Endothelial cell of umbilical vein (primary cell): ENCODE measurements at regions of chr4 and their contacts with region 1.

Region 1: GRCh38 chr4:163484906-163485305 is 9.6 kb upstream of the TMA16 start:
- DNase-seq: peak; percentile 56
- H3K4me3 ChIP-seq: no peak overlapping the region
- H3K27ac ChIP-seq: no peak overlapping the region
- H3K4me1 ChIP-seq: no peaks in the 10 kb centered on the region
- H3K27me3 ChIP-seq: peaks cover 9 to 13% of the 10 kb centered on the region in 2 experiments
- CTCF ChIP-seq: peak; percentile 43 to 49
- POLR2A ChIP-seq: no peak

Region 2: DNA sequence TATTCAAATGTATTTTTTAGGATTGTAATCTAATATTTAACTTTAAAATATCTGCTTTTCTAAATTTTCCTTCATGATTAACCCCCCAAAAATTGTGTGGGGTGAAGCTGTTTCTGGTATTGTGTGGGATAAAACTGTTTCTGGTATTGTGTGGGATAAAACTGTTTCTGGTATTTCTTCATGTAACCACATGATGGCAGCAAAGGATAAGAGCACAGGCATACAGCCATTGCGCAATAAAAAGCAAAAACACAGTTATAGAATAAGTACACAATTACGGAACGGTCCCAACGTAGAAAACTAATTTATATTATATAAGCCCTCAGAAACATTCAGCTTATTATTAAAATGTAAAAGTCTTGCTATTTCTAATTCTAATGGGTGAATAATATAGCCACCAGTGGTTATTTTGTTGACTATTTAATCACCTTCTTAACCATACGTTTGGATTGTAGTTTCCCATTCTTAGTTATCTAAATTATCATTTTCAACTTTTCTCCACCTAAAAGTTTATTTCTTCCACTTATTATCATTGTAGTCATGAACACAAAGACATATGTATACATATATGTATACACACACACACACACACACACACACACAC is 987.2 kb before region 1 on chr4:
- CTCF ChIA-PET with region 1: interaction called, 4 read pairs
- POLR2A ChIA-PET with region 1: no interaction called
- dilution Hi-C with region 1: no loop called
- intact Hi-C with region 1: loop called (anchors 10 kb)
- DNase-seq: peak; percentile 24
- H3K4me3 ChIP-seq: no peak overlapping the region
- H3K27ac ChIP-seq: no peak overlapping the region
- H3K4me1 ChIP-seq: no peaks in the 10 kb centered on the region
- H3K27me3 ChIP-seq: no peaks in the 10 kb centered on the region
- CTCF ChIP-seq: peak; percentile 30 to 44
- POLR2A ChIP-seq: no peak

Region 3: DNA sequence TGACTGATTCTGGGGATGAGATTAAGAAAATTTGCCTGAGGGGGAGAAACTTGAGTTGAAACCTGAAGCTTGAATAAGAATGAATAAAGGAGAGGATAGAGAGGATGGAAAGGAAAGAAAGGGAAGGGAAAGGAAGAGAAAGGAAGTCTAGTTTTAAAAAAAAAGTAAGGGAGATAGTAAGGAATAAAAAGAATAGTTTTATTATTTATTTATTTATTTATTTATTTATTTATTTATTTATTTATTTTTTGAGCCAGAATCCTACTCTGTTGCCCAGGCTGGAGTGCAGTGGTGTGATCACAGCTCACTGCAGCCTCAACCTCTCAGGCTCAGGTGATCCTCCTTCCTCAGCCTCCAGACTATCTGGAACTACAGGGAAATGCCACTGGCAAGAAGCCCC is 256.3 kb before region 1 on chr4:
- CTCF ChIA-PET with region 1: no interaction called
- POLR2A ChIA-PET with region 1: no interaction called
- dilution Hi-C with region 1: no loop called
- intact Hi-C with region 1: no loop called
- DNase-seq: no peak
- H3K4me3 ChIP-seq: no peak overlapping the region
- H3K27ac ChIP-seq: no peak overlapping the region
- H3K4me1 ChIP-seq: no peaks in the 10 kb centered on the region
- H3K27me3 ChIP-seq: no peaks in the 10 kb centered on the region
- CTCF ChIP-seq: no peak
- POLR2A ChIP-seq: no peak

Region 4: DNA sequence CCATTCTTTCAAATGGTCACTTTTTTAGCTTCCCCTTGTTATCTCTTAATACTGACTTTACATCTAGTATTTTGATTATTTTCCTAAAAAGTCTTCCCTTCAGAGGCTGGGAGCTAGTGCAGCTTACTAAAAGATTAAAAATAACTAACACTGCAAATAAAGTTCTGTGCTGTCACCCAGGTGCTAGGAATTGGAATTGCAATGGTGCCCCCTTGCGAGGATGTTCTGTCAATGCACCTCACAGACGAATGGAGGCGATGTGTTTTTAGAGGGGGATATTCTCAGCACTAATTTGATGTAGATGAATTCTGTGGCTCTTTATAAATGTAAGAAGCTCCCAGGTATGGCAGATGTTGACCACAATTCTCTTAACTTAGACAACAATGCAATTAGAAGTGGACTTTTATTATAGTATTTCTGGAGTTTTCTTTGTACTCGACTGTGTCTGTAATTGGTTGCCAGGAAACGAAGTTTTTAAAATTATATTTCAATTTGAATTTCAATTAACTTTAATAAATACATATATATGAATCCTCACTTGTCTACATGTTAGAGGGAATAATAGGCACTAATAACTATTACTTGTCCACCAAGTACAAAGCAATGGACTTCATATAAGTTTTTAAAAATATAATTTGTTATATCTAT is 1247.0 kb after region 1 on chr4:
- CTCF ChIA-PET with region 1: interaction called, 12 read pairs
- POLR2A ChIA-PET with region 1: no interaction called
- dilution Hi-C with region 1: no loop called
- intact Hi-C with region 1: no loop called
- DNase-seq: peak; percentile 46
- H3K4me3 ChIP-seq: no peak overlapping the region
- H3K27ac ChIP-seq: no peak overlapping the region
- H3K4me1 ChIP-seq: no peaks in the 10 kb centered on the region
- H3K27me3 ChIP-seq: no peaks in the 10 kb centered on the region
- CTCF ChIP-seq: peak; percentile 73 to 74
- POLR2A ChIP-seq: no peak

Region 5: DNA sequence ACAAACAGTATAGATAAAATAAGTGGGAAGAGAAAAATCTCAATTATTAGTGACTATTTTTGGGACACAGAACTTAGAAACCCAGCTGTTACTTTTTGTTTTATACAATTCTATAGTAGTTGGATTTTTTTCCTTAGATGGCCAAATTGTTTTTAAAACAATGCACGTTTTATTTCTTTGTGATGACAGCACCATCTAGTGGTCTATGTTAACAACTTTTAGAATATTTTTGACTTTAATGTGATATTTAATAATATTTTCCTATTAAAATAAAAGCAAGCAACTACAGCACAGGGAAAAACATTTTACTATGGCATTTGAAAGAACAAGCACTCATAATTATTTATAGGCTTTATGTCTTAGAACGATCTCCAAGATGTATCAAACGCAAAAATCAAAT is 1263.5 kb after region 1 on chr4:
- CTCF ChIA-PET with region 1: no interaction called
- POLR2A ChIA-PET with region 1: no interaction called
- dilution Hi-C with region 1: no loop called
- intact Hi-C with region 1: loop called (anchors 1 kb)
- DNase-seq: peak; percentile 20
- H3K4me3 ChIP-seq: no peak overlapping the region
- H3K27ac ChIP-seq: no peak overlapping the region
- H3K4me1 ChIP-seq: no peaks in the 10 kb centered on the region
- H3K27me3 ChIP-seq: no peaks in the 10 kb centered on the region
- CTCF ChIP-seq: peak in 1 of 2 donors; percentile 12
- POLR2A ChIP-seq: no peak